ENCODE measurements at regions of chr19 and their contacts with region 1.

Region 1: DNA sequence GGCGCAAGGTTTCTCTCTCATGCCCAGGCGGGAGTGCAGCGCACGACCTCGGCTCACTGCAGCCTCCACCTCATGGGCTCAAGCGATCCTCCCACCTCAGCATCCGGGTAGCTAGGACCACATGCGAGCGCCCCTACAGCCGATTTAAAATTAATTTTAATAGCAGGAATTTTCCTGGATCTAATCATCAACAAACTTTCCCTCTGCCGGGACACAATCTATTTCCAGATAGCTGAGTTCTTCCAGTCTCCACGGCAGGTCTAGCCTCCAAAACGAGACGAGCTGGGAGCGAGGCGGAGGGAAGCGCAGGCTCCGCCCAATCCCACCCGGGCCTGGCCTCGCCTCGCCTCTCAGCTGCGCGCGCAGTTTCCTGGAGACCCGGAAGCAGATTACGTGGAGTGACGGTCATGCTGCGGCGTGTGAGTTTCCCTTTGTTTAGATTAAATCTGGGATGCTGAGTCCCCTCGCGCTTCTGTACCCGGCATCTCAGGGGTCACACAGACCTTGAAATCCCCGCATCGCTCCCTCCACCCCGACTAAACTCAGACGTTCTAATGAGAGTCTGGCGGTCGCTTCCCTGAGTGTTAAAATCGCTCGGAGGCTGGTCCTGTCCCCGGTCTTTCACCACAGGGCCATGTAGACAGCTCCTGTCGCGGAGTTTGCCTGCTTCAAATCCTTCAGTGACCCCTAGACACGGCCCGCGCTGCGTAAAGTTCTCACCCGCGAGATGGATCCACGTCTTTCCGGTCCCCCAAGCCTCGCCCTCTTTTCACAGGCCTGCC is at the start of gene ZNF880:
- DNase-seq: peak; percentile 83 to 95 (median 93)
- H3K4me3 ChIP-seq: peak within 1 kb of the TSS; percentile 57 to 96 (median 82)
- H3K27ac ChIP-seq: peak within 1 kb of the TSS; percentile 38 to 96 (median 86)
- H3K27me3 ChIP-seq: no peaks in the 10 kb centered on the region
- CTCF ChIP-seq: peak in 23 of 56 donors; percentile 2 to 52 (median 24)
- total RNA-seq, gene ZNF880: 22.0 to 43.6 (median 31.5) TPM

Region 2: GRCh38 chr19:52336117-52336790 is 33.5 kb before region 1 on chr19 and contains the start of gene ZNF610:
- intact Hi-C with region 1: loop called in 1 of 2 experiments (anchors 2 kb)
- DNase-seq: peak; percentile 84 to 96 (median 90)
- H3K4me3 ChIP-seq: peak within 1 kb of the TSS; percentile 55 to 97 (median 85)
- H3K27ac ChIP-seq: peak within 1 kb of the TSS in 54 of 59 donors; percentile 34 to 91 (median 78)
- H3K27me3 ChIP-seq: no peaks in the 10 kb centered on the region
- CTCF ChIP-seq: peak in 10 of 56 donors; percentile 17 to 42 (median 26)
- total RNA-seq, gene ZNF610: 4.9 to 19.2 (median 10.9) TPM

Region 3: GRCh38 chr19:52520003-52520402 is 150.3 kb after region 1 on chr19:
- intact Hi-C with region 1: no loop called
- DNase-seq: no peak
- H3K4me3 ChIP-seq: no peak overlapping the region
- H3K27ac ChIP-seq: no peak overlapping the region
- H3K27me3 ChIP-seq: no peaks in the 10 kb centered on the region
- CTCF ChIP-seq: no peak